Aorta (tissue), 5 donors: ENCODE measurements at regions of chr14 and their contacts with region 1.

Region 1: GRCh38 chr14:66495218-66496098 is 9.3 kb downstream of the CCDC196 start:
- DNase-seq: peak in 1 of 2 donors; percentile 40
- ATAC-seq: peak; percentile 73
- H3K4me3 ChIP-seq: peak overlapping the region in 1 of 2 donors; percentile 41
- H3K27ac ChIP-seq: no peak overlapping the region
- H3K4me1 ChIP-seq: no peaks in the 10 kb centered on the region
- H3K27me3 ChIP-seq: no peaks in the 10 kb centered on the region

Region 2: DNA sequence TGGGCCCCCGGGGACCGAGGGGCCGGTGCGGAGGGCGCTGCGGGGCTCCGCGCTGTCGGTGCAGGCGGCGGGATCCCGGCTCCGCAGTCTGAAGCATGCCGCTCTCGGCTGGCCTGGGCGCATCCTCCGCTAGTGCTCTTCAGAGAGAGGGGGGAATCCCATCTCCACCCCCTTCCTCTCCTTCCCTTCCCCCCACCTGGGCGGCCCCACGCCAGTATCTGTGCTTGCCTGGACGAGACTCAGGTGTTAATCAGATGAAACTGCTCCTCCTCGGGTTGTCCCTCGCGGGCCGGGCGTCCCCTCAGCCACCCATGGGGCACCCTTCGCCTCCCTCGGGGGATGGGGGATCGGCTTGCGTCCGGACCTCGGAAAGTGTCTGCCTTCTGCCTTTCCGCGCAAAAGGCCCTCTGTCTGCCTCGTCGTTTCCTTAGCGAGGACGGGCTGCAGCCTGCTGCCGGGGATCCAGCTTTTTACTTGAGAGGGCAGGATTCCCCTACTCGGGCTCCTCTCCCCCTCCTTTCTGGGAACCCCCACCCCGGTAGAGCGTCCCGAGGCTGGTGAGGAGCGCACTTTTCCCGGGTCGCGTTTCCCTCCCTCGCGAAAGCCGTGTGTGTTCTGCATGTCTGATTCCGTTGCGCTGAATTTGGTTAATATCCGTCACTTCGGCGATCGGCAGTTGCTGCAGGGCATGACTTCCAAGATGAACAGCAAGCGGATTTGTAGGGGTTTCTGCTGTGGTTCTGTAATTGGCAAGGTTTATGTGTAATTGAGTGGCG is 13.6 kb after region 1 on chr14:
- intact Hi-C with region 1: no loop called
- DNase-seq: peak; percentile 58 to 81
- ATAC-seq: peak; percentile 41
- H3K4me3 ChIP-seq: peak overlapping the region; percentile 80 to 81
- H3K27ac ChIP-seq: peak overlapping the region; percentile 14 to 41
- H3K4me1 ChIP-seq: no peaks in the 10 kb centered on the region
- H3K27me3 ChIP-seq: no peaks in the 10 kb centered on the region

Region 3: DNA sequence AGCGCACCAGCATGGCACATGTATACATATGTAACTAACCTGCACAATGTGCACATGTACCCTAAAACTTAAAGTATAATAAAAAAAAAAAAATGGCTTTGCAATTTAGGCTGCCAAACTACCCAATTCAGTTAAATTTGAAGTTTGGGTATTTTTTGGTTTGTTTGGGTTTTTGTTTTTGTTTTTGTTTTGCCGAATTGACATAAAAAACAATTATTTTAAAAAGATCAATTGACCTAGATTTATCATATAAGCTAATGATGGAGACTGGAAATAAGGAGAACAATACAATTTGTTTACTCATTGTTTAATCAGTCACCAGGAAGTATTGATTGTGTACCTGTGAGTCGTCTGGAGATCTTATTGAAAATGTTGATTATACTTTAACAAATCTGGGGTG is 631.7 kb after region 1 on chr14:
- intact Hi-C with region 1: loop called in 1 of 2 experiments (anchors 10 kb)
- DNase-seq: no peak
- ATAC-seq: no peak
- H3K4me3 ChIP-seq: no peak overlapping the region
- H3K27ac ChIP-seq: no peak overlapping the region
- H3K4me1 ChIP-seq: no peaks in the 10 kb centered on the region
- H3K27me3 ChIP-seq: no peaks in the 10 kb centered on the region